ENCODE measurements at regions of chr6 and their contacts with region 1.

Region 1: GRCh38 chr6:130215526-130215925 is 7.2 kb downstream of the SAMD3 start:
- DNase-seq: no peak
- H3K4me3 ChIP-seq: no peak overlapping the region
- H3K27ac ChIP-seq: no peak overlapping the region
- H3K4me1 ChIP-seq: peaks cover 0 to 15% (median 0%) of the 10 kb centered on the region in 4 donors
- H3K27me3 ChIP-seq: no peaks in the 10 kb centered on the region
- CTCF ChIP-seq: no peak
- EP300 ChIP-seq: no peak
- POLR2A ChIP-seq: no peak

Region 2: DNA sequence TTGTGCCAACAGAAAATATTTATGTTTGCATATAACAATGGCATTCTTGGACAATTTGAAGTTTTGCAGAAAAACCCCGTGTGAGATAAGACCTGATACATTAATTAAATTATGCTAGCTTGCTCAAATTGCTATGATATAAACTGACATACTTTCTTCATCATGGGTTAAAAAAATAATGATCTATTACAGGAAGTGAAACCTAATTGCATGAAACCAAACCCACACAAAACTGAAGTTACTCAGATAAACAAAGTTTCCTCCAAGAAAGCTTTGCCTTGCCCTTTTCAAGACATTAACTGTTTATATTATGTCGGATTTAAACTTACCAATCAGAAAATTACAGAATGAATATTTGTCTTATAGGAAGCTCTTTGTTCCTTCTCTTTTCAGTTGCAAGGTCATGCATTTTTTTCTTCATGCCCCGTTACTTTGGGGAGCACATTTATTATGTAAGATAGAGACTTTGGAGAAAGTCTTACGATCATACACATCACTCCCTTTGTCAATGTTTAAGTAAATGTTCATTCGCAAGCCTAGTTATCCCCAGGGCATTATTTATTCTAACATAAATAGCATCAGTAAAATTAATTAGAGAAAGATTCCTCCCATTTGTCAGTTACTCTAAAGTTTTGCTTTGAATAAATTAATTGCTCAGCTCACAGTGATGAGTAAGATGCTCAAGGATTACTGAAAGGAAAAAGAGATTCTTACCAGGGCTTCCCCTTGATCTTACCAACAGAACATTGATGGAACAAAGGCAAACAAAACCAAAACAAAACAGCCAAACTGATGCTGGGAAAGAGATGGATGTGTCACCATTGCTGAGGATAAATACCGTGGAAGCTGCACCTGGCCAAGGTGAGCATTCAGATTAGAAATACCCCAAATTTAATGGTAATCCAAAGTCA is 339.7 kb before region 1 on chr6:
- in situ Hi-C with region 1: no loop called
- intact Hi-C with region 1: loop called (anchors 10 kb)
- DNase-seq: no peak
- H3K4me3 ChIP-seq: no peak overlapping the region
- H3K27ac ChIP-seq: no peak overlapping the region
- H3K4me1 ChIP-seq: no peaks in the 10 kb centered on the region
- H3K27me3 ChIP-seq: no peaks in the 10 kb centered on the region
- CTCF ChIP-seq: no peak
- EP300 ChIP-seq: no peak
- POLR2A ChIP-seq: no peak

Region 3: DNA sequence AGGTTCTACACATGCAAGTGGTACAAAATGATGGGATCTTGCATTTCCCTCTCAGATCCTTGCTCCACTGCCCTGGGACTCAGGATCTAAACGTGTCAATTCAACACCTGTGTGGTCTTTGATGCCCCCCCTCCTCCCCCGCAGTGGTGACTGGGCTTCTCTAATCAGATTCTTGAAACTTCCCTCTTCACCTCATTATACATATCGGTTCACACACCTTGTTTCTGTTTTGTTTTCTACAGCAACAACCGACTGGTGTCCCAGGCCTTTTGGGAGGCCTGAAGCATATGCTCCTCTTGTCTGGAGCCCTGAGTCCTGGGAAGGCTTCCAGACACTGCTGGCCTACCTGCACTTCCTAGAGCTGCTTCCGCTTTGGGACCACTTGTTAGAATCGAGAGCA is 12.7 kb before region 1 on chr6:
- in situ Hi-C with region 1: no loop called
- intact Hi-C with region 1: no loop called
- DNase-seq: peak; percentile 16
- H3K4me3 ChIP-seq: no peak overlapping the region
- H3K27ac ChIP-seq: no peak overlapping the region
- H3K4me1 ChIP-seq: no peaks in the 10 kb centered on the region
- H3K27me3 ChIP-seq: no peaks in the 10 kb centered on the region
- CTCF ChIP-seq: no peak
- EP300 ChIP-seq: no peak
- POLR2A ChIP-seq: no peak

Region 4: DNA sequence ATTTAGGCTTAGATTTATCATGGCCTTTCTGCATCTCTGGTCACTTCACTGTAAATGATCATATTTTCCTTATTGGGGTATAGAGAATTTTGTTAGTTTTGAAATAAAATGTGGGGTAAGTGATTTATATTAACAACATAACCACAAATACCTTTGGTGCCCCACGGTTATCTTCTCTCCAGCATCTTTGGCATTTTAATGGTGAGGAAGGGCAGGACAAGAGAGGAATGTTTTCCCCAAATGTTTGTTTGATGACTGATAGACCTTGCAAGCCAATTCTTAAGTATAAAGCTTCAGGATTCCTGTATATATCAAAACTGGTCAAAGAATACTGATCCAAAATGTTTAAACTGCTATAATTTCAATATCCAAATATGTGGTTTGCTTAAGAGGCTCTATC is 440.1 kb after region 1 on chr6:
- in situ Hi-C with region 1: no loop called
- intact Hi-C with region 1: no loop called
- DNase-seq: no peak
- H3K4me3 ChIP-seq: no peak overlapping the region
- H3K27ac ChIP-seq: no peak overlapping the region
- H3K4me1 ChIP-seq: no peaks in the 10 kb centered on the region
- H3K27me3 ChIP-seq: no peaks in the 10 kb centered on the region
- CTCF ChIP-seq: no peak
- EP300 ChIP-seq: no peak
- POLR2A ChIP-seq: no peak

Measured in transverse colon (tissue), 4 donors.